Lower leg skin (tissue), 4 donors: ENCODE measurements at regions of chr1 and their contacts with region 1.

Region 1: GRCh38 chr1:111222308-111223125 is 5.0 kb upstream of the CHI3L2 start:
- DNase-seq: peak; percentile 49 to 95
- H3K4me3 ChIP-seq: no peak overlapping the region
- CTCF ChIP-seq: peak in 1 of 3 donors; percentile 92
- POLR2A ChIP-seq: no peak

Region 2: GRCh38 chr1:111399792-111400610 is 177.5 kb after region 1 on chr1:
- intact Hi-C with region 1: loop called (anchors 5 kb)
- DNase-seq: peak in 1 of 2 donors; percentile 63
- H3K4me3 ChIP-seq: no peak overlapping the region
- CTCF ChIP-seq: no peak
- POLR2A ChIP-seq: no peak